ENCODE measurements at regions of chr17 and their contacts with region 1.

Region 1: GRCh38 chr17:34637548-34638525 is 58.5 kb downstream of the TMEM132E start:
- DNase-seq: peak; percentile 70 to 90 (median 78)
- ATAC-seq: peak; percentile 97
- H3K4me3 ChIP-seq: peak overlapping the region; percentile 66
- H3K4me3 Mint-ChIP-seq: peak overlapping the region; percentile 87
- H3K27ac ChIP-seq: no peak overlapping the region
- H3K27ac Mint-ChIP-seq: peak overlapping the region; percentile 14
- H3K4me1 ChIP-seq: peaks cover 18% of the 10 kb centered on the region
- H3K4me1 Mint-ChIP-seq: peaks cover 6% of the 10 kb centered on the region
- H3K27me3 ChIP-seq: no peaks in the 10 kb centered on the region
- H3K27me3 Mint-ChIP-seq: peaks cover 12% of the 10 kb centered on the region
- CTCF ChIP-seq: peak; percentile 77

Region 2: DNA sequence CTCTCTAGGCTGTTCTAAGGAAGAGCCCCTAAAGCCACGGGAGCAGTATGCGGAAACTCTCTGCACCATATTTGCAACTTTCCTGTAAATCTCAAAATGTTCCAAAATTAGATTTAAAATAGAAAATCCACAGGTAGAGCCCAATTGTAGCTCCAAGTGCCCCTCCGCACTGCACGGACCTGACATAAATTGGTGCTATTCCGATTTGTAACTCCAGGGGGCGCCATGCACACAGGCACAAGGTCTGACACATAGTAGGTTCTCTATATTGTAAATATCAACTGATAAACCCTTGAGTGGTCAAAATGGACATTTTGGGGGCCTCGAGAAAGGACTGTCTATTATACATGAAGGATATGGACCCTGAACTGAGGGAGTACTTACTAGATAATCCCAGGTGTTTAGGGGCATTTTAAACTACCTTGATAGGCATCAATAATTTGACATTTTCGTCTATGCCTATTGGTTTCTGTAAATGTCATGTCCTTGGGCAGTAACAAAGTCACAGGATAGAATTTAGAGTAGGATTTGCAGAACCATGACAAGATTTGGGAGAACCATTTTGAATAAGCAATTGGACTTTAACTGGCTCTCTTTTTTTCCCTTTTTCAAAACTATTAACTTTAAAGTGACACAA is 95.0 kb before region 1 on chr17:
- CTCF ChIA-PET with region 1: interaction called, 3 read pairs
- POLR2A ChIA-PET with region 1: no interaction called
- intact Hi-C with region 1: loop called (anchors 1 kb)
- DNase-seq: peak; percentile 29 to 75 (median 50)
- ATAC-seq: no peak
- H3K4me3 ChIP-seq: no peak overlapping the region
- H3K4me3 Mint-ChIP-seq: no peak overlapping the region
- H3K27ac ChIP-seq: no peak overlapping the region
- H3K27ac Mint-ChIP-seq: no peak overlapping the region
- H3K4me1 ChIP-seq: no peaks in the 10 kb centered on the region
- H3K4me1 Mint-ChIP-seq: no peaks in the 10 kb centered on the region
- H3K27me3 ChIP-seq: peaks cover 0 to 4% of the 10 kb centered on the region in 2 experiments
- H3K27me3 Mint-ChIP-seq: peaks cover 59% of the 10 kb centered on the region
- CTCF ChIP-seq: peak; percentile 88

Region 3: GRCh38 chr17:34562387-34562786 is 75.5 kb before region 1 on chr17:
- CTCF ChIA-PET with region 1: no interaction called
- POLR2A ChIA-PET with region 1: no interaction called
- intact Hi-C with region 1: loop called in 1 of 2 experiments (anchors 5 kb)
- DNase-seq: peak in 3 of 14 experiments; percentile 16 to 39 (median 37)
- ATAC-seq: peak; percentile 56
- H3K4me3 ChIP-seq: no peak overlapping the region
- H3K4me3 Mint-ChIP-seq: no peak overlapping the region
- H3K27ac ChIP-seq: no peak overlapping the region
- H3K27ac Mint-ChIP-seq: no peak overlapping the region
- H3K4me1 ChIP-seq: no peaks in the 10 kb centered on the region
- H3K4me1 Mint-ChIP-seq: no peaks in the 10 kb centered on the region
- H3K27me3 ChIP-seq: peaks cover 13 to 18% of the 10 kb centered on the region in 2 experiments
- H3K27me3 Mint-ChIP-seq: peaks cover 28% of the 10 kb centered on the region
- CTCF ChIP-seq: peak; percentile 25

Region 4: GRCh38 chr17:34584805-34585416 is 52.9 kb before region 1 on chr17:
- CTCF ChIA-PET with region 1: no interaction called
- POLR2A ChIA-PET with region 1: interaction called, 4 read pairs
- intact Hi-C with region 1: loop called (anchors 5 kb)
- DNase-seq: peak in 3 of 14 experiments; percentile 27 to 40 (median 29)
- ATAC-seq: peak; percentile 17
- H3K4me3 ChIP-seq: no peak overlapping the region
- H3K4me3 Mint-ChIP-seq: no peak overlapping the region
- H3K27ac ChIP-seq: no peak overlapping the region
- H3K27ac Mint-ChIP-seq: no peak overlapping the region
- H3K4me1 ChIP-seq: peaks cover 23% of the 10 kb centered on the region
- H3K4me1 Mint-ChIP-seq: no peaks in the 10 kb centered on the region
- H3K27me3 ChIP-seq: peaks cover 53 to 64% of the 10 kb centered on the region in 2 experiments
- H3K27me3 Mint-ChIP-seq: peaks cover 64% of the 10 kb centered on the region
- CTCF ChIP-seq: no peak

Region 5: GRCh38 chr17:34692920-34693319 is 55.1 kb after region 1 on chr17:
- CTCF ChIA-PET with region 1: no interaction called
- POLR2A ChIA-PET with region 1: no interaction called
- intact Hi-C with region 1: no loop called
- DNase-seq: no peak
- ATAC-seq: no peak
- H3K4me3 ChIP-seq: no peak overlapping the region
- H3K4me3 Mint-ChIP-seq: no peak overlapping the region
- H3K27ac ChIP-seq: no peak overlapping the region
- H3K27ac Mint-ChIP-seq: no peak overlapping the region
- H3K4me1 ChIP-seq: no peaks in the 10 kb centered on the region
- H3K4me1 Mint-ChIP-seq: no peaks in the 10 kb centered on the region
- H3K27me3 ChIP-seq: peaks cover 2 to 10% of the 10 kb centered on the region in 2 experiments
- H3K27me3 Mint-ChIP-seq: peaks cover 48% of the 10 kb centered on the region
- CTCF ChIP-seq: no peak